Heart right ventricle (tissue), 16 donors: ENCODE measurements at regions of chr16 and their contacts with region 1.

Region 1: GRCh38 chr16:27754795-27755690 is 205.1 kb downstream of the KATNIP start:
- DNase-seq: no peak
- ATAC-seq: no peak
- H3K4me3 ChIP-seq: no peak overlapping the region
- H3K27ac ChIP-seq: no peak overlapping the region
- H3K4me1 ChIP-seq: peaks cover 0 to 11% (median 0%) of the 10 kb centered on the region in 9 donors
- H3K27me3 ChIP-seq: no peaks in the 10 kb centered on the region
- CTCF ChIP-seq: no peak

Region 2: DNA sequence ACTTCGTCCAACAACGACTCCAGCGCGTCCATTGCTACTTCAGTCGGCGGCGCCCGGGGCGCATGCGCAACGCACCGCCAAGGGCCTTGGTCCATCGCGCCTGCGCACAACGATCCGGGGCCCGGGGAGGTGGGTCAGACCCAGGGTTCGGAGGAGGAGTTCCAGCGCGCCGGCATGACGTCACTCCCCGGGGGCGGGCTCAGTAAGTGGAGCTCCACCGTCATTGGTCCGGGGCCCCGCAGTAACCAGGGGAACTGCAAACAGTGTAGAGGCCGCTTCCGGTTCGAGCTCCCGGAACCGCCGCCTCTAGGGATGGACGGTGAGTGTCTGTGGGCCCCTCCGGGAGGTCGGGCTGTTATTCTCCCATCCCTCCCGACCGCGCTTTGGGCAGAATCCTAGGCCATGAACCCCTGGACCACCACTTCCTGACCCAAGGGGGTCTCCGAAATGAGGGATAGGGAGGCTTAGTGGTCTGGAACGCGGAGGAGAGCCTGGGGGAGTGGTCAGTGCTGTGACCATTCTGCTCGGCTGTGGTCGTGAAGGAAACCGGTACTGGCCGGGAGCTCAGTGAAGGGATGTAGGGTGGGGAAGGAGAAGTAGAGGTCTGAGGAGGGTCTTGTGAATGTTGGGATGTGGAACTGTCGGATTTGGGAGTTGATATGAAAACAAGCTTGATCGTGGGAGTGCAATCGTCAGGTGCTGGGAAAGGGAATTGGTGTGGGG is 205.0 kb before region 1 on chr16 and contains the starts of genes GTF3C1 and KATNIP:
- intact Hi-C with region 1: no loop called
- DNase-seq: peak; percentile 100
- ATAC-seq: peak; percentile 99 to 100 (median 100)
- H3K4me3 ChIP-seq: peak within 1 kb of the TSS; percentile 53 to 93 (median 82)
- H3K27ac ChIP-seq: peak within 1 kb of the TSS; percentile 65 to 92 (median 87)
- H3K4me1 ChIP-seq: peaks cover 8 to 46% (median 39%) of the 10 kb centered on the region in 9 donors
- H3K27me3 ChIP-seq: no peaks in the 10 kb centered on the region
- CTCF ChIP-seq: no peak
- total RNA-seq, gene GTF3C1: 48.1 to 84.5 (median 62.8) TPM
- total RNA-seq, gene KATNIP: 8.6 to 25.0 (median 16.8) TPM

Region 3: DNA sequence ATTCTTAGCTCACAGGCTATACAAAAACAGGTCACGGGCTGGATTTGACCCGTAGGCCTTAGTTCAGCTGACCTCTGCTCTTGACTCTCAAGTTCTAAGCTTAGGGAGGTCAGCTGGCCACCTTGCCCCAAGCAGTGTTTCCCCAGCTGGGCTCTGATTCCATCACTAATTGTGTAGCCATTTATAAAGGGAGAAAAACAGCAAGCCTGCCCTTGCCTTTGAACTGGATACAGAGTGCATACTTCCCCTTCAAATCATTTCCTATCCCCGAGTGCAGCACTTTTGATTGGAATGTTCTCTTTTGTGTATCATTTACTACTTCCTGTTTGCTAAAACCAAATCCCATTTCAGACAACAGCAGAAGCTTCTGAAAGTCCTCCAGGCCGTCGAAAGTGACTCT is 51.5 kb before region 1 on chr16:
- intact Hi-C with region 1: loop called in 1 of 10 experiments (anchors 5 kb)
- DNase-seq: no peak
- ATAC-seq: no peak
- H3K4me3 ChIP-seq: no peak overlapping the region
- H3K27ac ChIP-seq: no peak overlapping the region
- H3K4me1 ChIP-seq: peaks cover 0 to 7% (median 0%) of the 10 kb centered on the region in 9 donors
- H3K27me3 ChIP-seq: no peaks in the 10 kb centered on the region
- CTCF ChIP-seq: no peak

Region 4: GRCh38 chr16:27847030-27847550 is 92.0 kb after region 1 on chr16:
- intact Hi-C with region 1: no loop called
- DNase-seq: no peak
- ATAC-seq: no peak
- H3K4me3 ChIP-seq: no peak overlapping the region
- H3K27ac ChIP-seq: no peak overlapping the region
- H3K4me1 ChIP-seq: no peaks in the 10 kb centered on the region
- H3K27me3 ChIP-seq: peaks cover 0 to 57% (median 4%) of the 10 kb centered on the region in 7 donors
- CTCF ChIP-seq: no peak